Activated B cell treated with CpG ODN at 0.5 μM for 24 hours (primary cell): ENCODE measurements at regions of chr11 and their contacts with region 1.

Region 1: DNA sequence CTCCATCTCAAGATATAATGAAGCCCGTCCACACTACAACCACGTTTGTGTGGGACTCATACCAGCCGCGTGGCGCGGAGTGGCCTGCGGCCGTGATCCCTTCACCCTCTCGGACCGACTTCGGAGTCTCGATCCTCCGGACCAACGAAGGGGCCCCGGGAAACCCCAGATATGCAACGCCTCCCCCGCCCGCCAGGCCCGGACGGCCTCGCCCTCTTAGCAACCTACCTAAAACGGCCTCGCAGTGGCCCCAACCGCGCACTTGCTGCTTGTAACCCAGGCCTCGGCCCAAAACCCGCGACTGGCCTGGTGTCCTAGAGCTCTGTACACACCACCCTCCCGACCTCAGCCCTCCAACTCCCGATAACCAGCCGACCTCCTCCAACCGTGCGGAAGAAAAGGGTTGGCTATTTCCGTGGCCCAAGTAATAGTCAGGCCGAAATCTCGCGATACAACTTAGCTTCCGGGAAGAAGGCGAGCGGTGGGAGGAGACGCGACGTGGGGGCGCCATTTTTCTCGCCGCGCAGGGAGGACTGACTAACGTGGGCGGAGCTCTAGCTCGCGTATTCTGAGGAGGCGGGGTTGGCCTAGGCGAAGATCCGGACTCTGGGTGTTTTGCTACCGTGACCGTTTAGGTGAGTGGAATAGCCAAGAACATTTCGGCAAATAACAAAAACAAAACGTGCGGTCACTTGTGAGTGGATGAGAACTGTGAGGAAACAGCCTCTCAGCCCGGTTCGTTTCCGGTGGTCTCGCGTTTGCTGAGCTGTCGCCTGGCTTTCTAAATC is at the starts of genes C11orf54 and TAF1D:
- DNase-seq: peak; percentile 88
- ATAC-seq: peak; percentile 91
- H3K4me3 Mint-ChIP-seq: peak within 1 kb of the TSS; percentile 100
- H3K27ac Mint-ChIP-seq: peak within 1 kb of the TSS; percentile 100
- H3K4me1 Mint-ChIP-seq: peaks cover 58% of the 10 kb centered on the region
- H3K27me3 Mint-ChIP-seq: no peaks in the 10 kb centered on the region
- CTCF ChIP-seq: no peak
- total RNA-seq, gene C11orf54: 23.7 and 30.1 TPM in 2 replicates
- total RNA-seq, gene TAF1D: 258 and 315 TPM in 2 replicates

Region 2: DNA sequence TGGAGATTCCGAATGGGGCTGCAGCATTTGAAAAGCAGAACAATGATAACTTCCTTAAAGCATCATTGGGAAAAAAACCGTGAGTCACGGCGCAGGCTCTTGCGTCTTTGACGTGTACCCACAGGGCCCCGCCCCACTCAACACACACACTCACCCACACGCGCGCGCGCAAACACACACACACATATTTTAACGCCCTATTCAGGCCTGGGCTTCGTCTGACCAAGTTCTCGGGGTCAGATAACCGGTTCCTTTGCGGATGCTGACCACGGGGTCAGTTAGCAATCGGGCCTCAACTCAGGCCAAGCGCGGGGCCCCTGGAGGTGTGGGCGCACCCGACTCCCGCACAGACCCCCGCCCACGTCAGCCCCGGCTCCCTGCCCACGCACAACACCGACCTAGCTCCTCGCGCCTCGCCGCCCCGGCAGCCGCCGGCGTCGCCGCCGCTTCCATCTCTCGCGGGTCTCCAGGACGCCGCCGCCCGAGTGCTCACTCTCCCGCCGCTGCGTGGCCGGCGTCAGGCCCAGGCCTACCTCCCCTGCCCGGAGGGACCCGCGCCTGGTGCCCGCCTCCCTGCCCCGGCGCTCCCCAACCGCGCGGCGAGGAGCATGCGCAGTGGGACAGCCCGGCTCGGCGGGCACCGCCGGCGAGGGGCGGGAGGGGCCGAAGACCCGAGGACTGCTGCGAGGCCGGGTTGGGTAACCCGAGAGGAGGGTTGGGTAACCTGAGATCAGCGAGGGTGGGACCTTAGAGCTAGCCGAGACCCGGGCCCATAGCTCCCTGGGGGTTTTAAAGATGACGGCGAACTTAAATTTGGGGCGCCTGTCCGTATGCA is 543.7 kb before region 1 on chr11 and contains the start of gene SLC36A4:
- CTCF ChIA-PET with region 1: no interaction called
- POLR2A ChIA-PET with region 1: interaction called, 14 read pairs
- intact Hi-C with region 1: loop called (anchors 1 kb)
- DNase-seq: peak; percentile 85
- ATAC-seq: peak; percentile 86
- H3K4me3 Mint-ChIP-seq: peak within 1 kb of the TSS; percentile 91
- H3K27ac Mint-ChIP-seq: peak within 1 kb of the TSS; percentile 93
- H3K4me1 Mint-ChIP-seq: peaks cover 15% of the 10 kb centered on the region
- H3K27me3 Mint-ChIP-seq: no peaks in the 10 kb centered on the region
- CTCF ChIP-seq: no peak
- total RNA-seq, gene SLC36A4: 14.9 and 17.0 TPM in 2 replicates

Region 3: GRCh38 chr11:93662177-93662575 is 79.1 kb before region 1 on chr11:
- CTCF ChIA-PET with region 1: no interaction called
- POLR2A ChIA-PET with region 1: interaction called, 43 read pairs
- intact Hi-C with region 1: loop called (anchors 1 kb)
- DNase-seq: no peak
- ATAC-seq: no peak
- H3K4me3 Mint-ChIP-seq: peak overlapping the region; percentile 84
- H3K27ac Mint-ChIP-seq: peak overlapping the region; percentile 85
- H3K4me1 Mint-ChIP-seq: peaks cover 23% of the 10 kb centered on the region
- H3K27me3 Mint-ChIP-seq: no peaks in the 10 kb centered on the region
- CTCF ChIP-seq: no peak

Region 4: GRCh38 chr11:93712678-93713077 is 28.6 kb before region 1 on chr11:
- CTCF ChIA-PET with region 1: interaction called, 3 read pairs
- POLR2A ChIA-PET with region 1: interaction called, 99 read pairs
- intact Hi-C with region 1: no loop called
- DNase-seq: no peak
- ATAC-seq: no peak
- H3K4me3 Mint-ChIP-seq: no peak overlapping the region
- H3K27ac Mint-ChIP-seq: no peak overlapping the region
- H3K4me1 Mint-ChIP-seq: peaks cover 20% of the 10 kb centered on the region
- H3K27me3 Mint-ChIP-seq: no peaks in the 10 kb centered on the region
- CTCF ChIP-seq: no peak

Region 5: DNA sequence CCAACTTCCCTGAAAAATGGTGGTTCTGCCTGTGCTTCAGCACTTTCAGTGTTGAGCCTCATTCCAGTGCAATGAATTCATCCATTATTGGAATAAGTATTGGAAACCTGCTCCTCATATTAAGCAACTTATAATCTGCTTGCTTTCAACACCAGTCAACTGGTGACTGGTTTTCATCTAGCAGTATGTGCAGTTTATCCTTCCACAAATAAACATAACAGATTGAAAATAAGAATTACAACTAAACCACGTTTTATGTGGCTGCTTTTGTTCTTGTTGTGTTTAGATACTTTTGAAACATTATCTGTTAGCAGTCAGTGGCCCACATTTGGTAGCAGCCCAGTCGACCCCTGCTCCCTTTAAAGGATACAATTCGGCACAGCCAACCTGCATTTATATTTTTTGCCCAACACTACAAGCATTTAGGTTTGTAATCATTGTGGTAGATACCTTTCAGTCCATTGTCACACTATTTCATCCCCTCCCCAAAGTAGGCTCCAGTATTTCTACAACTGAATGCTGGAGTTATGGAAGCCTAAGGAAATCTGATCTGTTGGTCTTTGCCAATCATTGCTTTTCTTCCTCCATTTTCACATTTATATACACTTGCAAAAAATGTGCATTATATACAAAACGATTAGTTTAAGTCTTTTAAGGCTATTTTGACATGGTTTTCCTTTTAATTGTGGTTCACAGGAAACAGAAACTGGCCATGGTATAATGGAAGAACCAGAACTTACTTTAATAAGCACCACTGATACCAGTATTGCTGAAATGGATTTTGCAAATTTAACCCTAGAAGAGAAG is 13.1 kb before region 1 on chr11:
- CTCF ChIA-PET with region 1: interaction called, 5 read pairs
- POLR2A ChIA-PET with region 1: interaction called, 114 read pairs
- intact Hi-C with region 1: loop called (anchors 1 kb)
- DNase-seq: no peak
- ATAC-seq: no peak
- H3K4me3 Mint-ChIP-seq: no peak overlapping the region
- H3K27ac Mint-ChIP-seq: peak overlapping the region; percentile 35
- H3K4me1 Mint-ChIP-seq: peaks cover 6% of the 10 kb centered on the region
- H3K27me3 Mint-ChIP-seq: no peaks in the 10 kb centered on the region
- CTCF ChIP-seq: no peak

Region 6: GRCh38 chr11:94128746-94129511 is 387.6 kb after region 1 on chr11 and contains the start of gene PANX1:
- CTCF ChIA-PET with region 1: no interaction called
- POLR2A ChIA-PET with region 1: interaction called, 19 read pairs
- intact Hi-C with region 1: loop called (anchors 2 kb)
- DNase-seq: peak; percentile 69
- ATAC-seq: peak; percentile 85
- H3K4me3 Mint-ChIP-seq: no peak within 1 kb of the TSS
- H3K27ac Mint-ChIP-seq: peak within 1 kb of the TSS; percentile 93
- H3K4me1 Mint-ChIP-seq: peaks cover 27% of the 10 kb centered on the region
- H3K27me3 Mint-ChIP-seq: no peaks in the 10 kb centered on the region
- CTCF ChIP-seq: no peak
- total RNA-seq, gene PANX1: 9.2 and 11.2 TPM in 2 replicates

Region 7: DNA sequence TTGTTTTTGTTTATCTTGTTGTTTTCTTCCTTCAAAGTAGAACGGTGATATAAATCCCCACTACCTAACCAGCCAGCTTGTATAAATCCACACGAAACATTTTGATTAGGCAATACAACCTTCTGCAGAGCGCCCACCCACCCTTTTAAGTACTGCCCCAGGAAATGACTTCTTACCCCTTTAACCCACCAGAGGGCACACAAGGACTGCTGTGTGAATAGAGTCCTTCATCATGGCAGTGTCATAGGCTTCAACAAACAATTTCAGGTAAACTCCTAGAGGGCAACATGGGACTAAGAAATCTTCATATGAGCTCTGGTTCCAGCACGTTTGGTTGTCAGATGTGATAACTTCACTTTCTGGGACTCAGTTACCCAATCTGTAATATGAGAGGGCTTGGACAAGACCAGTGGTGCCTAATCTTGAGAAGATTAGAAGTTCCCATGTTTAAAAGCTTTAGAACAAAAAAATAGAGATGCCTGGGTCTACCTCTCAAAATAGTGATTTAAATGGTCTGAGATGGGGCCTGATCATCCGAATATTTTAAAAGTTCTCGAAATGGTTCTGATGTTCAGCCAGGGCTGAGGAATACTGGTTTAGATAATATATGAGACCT is 881.9 kb after region 1 on chr11:
- CTCF ChIA-PET with region 1: no interaction called
- POLR2A ChIA-PET with region 1: interaction called, 11 read pairs
- intact Hi-C with region 1: no loop called
- DNase-seq: no peak
- ATAC-seq: peak; percentile 58
- H3K4me3 Mint-ChIP-seq: no peak overlapping the region
- H3K27ac Mint-ChIP-seq: no peak overlapping the region
- H3K4me1 Mint-ChIP-seq: no peaks in the 10 kb centered on the region
- H3K27me3 Mint-ChIP-seq: peaks cover 14% of the 10 kb centered on the region
- CTCF ChIP-seq: no peak